ENCODE measurements at regions of chr19 and their contacts with region 1.

Region 1: GRCh38 chr19:10864538-10864899 is 6.8 kb upstream of the CARM1 start:
- DNase-seq: peak; percentile 80 to 92 (median 88)
- H3K4me3 ChIP-seq: no peak overlapping the region
- H3K27ac ChIP-seq: no peak overlapping the region
- H3K4me1 ChIP-seq: no peaks in the 10 kb centered on the region
- H3K27me3 ChIP-seq: no peaks in the 10 kb centered on the region
- CTCF ChIP-seq: peak; percentile 72 to 89 (median 77)
- EP300 ChIP-seq: no peak
- POLR2A ChIP-seq: no peak

Region 2: GRCh38 chr19:10580979-10581631 is 283.4 kb before region 1 on chr19:
- intact Hi-C with region 1: loop called in 1 of 4 experiments (anchors 5 kb)
- DNase-seq: peak; percentile 77 to 91 (median 89)
- H3K4me3 ChIP-seq: no peak overlapping the region
- H3K27ac ChIP-seq: no peak overlapping the region
- H3K4me1 ChIP-seq: no peaks in the 10 kb centered on the region
- H3K27me3 ChIP-seq: no peaks in the 10 kb centered on the region
- CTCF ChIP-seq: peak; percentile 84 to 99 (median 98)
- EP300 ChIP-seq: no peak
- POLR2A ChIP-seq: no peak

Region 3: DNA sequence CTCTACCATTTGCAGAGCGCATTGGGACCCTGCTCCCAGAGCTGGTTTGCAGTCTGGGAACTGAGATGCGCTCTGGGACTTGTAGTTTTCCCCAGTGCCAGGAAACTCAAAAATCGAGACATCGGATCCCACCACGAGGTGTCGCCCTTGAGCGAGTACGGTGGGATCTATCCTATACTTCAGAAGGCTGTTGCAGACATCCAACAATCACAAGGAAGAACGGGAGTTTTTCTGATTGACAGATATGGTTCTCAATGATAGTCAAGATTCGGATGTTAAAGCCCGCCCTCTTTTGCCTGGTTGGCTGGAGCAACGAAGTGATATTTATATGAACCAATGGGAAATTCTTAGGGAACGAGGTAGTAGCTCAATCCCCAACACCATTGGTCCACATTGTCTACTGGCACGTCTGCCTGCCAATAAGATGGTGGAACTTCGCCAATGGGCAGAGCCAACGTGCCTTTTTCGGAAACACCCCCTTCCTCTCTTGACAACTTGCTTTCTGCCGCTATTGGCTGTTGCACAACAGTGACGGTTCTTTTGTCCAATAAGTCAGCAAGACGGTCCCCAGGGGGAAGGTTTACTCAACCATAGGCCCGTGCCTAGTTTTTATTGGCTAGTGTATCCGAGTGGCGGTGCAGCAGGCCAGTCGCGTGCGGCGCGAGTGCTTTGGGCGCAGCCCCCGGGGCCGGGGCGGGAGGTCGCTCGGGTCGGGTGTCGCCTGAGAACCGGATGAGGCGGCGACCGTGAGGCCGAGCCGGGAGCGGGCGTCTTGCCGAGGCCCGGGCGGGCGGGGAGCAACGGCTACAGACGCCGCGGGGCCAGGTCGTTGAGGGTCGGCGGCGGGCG is 146.9 kb before region 1 on chr19 and contains the start of gene DNM2:
- intact Hi-C with region 1: loop called (anchors 5 to 10 kb)
- DNase-seq: peak; percentile 97 to 99 (median 99)
- H3K4me3 ChIP-seq: peak within 1 kb of the TSS; percentile 96
- H3K27ac ChIP-seq: peak within 1 kb of the TSS; percentile 35 to 87
- H3K4me1 ChIP-seq: peaks cover 17% of the 10 kb centered on the region
- H3K27me3 ChIP-seq: no peaks in the 10 kb centered on the region
- CTCF ChIP-seq: peak; percentile 84 to 92 (median 87)
- EP300 ChIP-seq: no peak
- POLR2A ChIP-seq: peak; percentile 48
- total RNA-seq, gene DNM2: 51.1 to 121 (median 87.5) TPM

Region 4: GRCh38 chr19:10724551-10725071 is 139.9 kb before region 1 on chr19:
- intact Hi-C with region 1: loop called (anchors 5 to 10 kb)
- DNase-seq: no peak
- H3K4me3 ChIP-seq: no peak overlapping the region
- H3K27ac ChIP-seq: no peak overlapping the region
- H3K4me1 ChIP-seq: peaks cover 11% of the 10 kb centered on the region
- H3K27me3 ChIP-seq: no peaks in the 10 kb centered on the region
- CTCF ChIP-seq: no peak
- EP300 ChIP-seq: no peak
- POLR2A ChIP-seq: no peak

Region 5: DNA sequence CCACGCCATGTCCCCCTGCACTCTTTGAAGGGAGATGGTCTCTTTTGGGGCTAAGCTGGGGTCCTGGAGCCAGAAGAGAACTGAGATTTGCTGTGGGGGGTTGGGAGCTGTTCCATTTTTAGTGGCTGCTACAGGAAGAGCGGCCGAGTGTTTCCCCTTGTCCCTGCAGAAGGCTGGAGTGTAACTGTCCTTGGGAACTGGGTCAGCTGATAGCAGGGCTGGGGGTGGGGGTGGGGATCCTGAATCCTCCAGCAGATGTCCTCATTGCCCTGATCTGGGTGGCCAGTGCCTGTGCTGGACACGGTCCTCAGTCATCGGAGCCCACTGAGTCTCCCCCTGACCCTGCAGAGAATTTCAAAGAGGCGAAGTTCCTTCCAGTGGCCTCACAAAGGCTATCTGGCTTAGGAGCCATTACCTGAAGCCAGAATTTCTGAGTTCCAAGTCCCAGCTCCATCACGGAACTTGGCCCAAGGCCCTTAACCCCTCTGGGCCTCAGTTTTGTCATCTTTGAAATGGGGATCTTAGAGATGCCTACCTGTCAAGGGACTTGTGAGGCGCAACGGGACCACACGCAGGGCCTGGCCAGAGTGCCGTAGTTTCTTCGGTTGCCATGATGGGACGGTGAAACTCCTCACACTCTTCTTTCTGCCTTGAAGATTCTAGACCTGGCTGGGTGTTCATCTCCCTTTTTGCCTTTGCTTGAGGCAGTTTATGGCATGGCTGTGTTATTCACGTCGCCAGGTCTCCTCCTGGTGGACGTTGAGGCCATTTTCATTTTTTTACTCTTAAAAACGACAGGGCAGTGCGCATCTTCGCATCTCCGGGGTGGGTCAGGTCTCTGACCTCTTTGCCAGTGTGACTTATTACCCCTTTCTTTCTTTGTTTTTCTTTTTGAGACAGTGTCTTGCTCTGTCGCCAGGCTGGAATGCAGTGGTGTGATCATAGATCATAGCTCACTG is 94.7 kb before region 1 on chr19:
- intact Hi-C with region 1: loop called in 1 of 4 experiments (anchors 5 kb)
- DNase-seq: peak; percentile 58 to 73 (median 64)
- H3K4me3 ChIP-seq: no peak overlapping the region
- H3K27ac ChIP-seq: peak overlapping the region in 1 of 2 donors; percentile 49
- H3K4me1 ChIP-seq: peaks cover 15% of the 10 kb centered on the region
- H3K27me3 ChIP-seq: no peaks in the 10 kb centered on the region
- CTCF ChIP-seq: peak in 2 of 3 donors; percentile 38 to 48
- EP300 ChIP-seq: no peak
- POLR2A ChIP-seq: no peak

Region 6: DNA sequence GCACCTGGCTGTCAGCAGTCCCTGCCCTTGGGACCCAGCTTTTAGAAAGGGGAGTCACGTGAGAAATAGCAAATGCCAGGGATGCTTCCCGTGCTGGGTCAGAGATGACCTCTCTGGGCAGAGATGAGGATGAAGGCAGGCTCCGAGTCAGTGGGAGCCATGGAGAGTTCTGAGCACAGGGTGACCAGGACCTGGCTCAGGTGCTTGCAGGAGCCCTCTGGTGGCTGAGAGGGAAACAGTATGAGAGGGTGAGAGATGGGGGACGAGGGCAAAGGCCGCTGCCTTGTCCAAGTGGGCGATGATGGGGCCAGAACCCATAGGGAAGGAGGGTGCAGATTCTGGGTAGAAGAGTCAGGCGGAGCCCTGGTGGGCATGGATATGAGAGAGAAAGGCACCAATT is 44.3 kb before region 1 on chr19:
- intact Hi-C with region 1: no loop called
- DNase-seq: no peak
- H3K4me3 ChIP-seq: no peak overlapping the region
- H3K27ac ChIP-seq: no peak overlapping the region
- H3K4me1 ChIP-seq: peaks cover 6% of the 10 kb centered on the region
- H3K27me3 ChIP-seq: no peaks in the 10 kb centered on the region
- CTCF ChIP-seq: no peak
- EP300 ChIP-seq: no peak
- POLR2A ChIP-seq: no peak

Measured in ovary (tissue), 10 donors.